ENCODE measurements at regions of chr9 and their contacts with region 1.

Region 1: GRCh38 chr9:98974994-98975712 is 31.4 kb downstream of the COL15A1 start:
- DNase-seq: peak; percentile 69 to 99
- H3K4me3 ChIP-seq: peak overlapping the region in 1 of 4 experiments; percentile 38; a peak in 1 of 8 replicates
- H3K27ac ChIP-seq: no peak overlapping the region
- H3K4me1 ChIP-seq: peaks cover 4 to 19% (median 9%) of the 10 kb centered on the region in 4 experiments
- H3K27me3 ChIP-seq: peaks cover 7 to 44% (median 28%) of the 10 kb centered on the region in 4 experiments
- CTCF ChIP-seq: peak; percentile 93 to 99 (median 99)
- EP300 ChIP-seq: no peak
- POLR2A ChIP-seq: no peak
- RAD21 ChIP-seq: peak; percentile 76 to 89

Region 2: DNA sequence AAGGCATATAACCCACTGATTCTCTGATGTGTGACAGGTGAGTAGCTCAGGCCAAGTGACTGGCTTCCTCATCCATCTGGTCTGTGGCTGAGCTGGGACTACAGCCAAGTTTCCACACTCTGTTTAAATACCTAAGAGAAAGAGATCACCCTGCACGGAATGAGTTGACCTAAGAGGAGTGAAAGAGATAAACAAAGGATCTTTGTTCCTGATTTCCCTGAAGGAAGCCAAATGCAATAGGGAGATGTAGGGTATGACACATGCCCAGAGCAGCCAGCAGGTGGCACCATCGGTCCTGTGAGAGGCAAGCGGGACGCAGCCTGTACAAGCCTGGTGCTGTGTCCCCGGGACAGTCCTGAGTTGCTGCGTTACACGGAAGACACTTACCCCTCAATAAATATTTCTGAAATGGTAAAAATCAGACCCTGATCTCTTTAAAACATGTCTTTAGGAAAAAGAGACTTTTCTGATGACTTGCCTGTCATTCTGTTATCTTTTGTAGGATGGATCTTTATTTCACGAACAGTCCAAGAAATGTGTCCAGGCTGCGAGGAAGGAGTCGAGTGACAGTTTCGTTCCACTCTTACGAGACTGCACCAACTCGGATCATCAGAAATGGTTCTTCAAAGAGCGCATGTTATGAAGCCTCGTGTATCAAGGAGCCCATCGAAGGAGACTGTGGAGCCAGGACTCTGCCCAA is 126.6 kb before region 1 on chr9:
- CTCF ChIA-PET with region 1: interaction called, 14 read pairs
- POLR2A ChIA-PET with region 1: no interaction called
- DNase-seq: peak; percentile 83 to 91
- H3K4me3 ChIP-seq: no peak overlapping the region
- H3K27ac ChIP-seq: no peak overlapping the region
- H3K4me1 ChIP-seq: peaks cover 0 to 5% (median 2%) of the 10 kb centered on the region in 4 experiments; a peak in 3 of 7 replicates
- H3K27me3 ChIP-seq: no peaks in the 10 kb centered on the region
- CTCF ChIP-seq: peak; percentile 86 to 96 (median 96)
- EP300 ChIP-seq: no peak
- POLR2A ChIP-seq: no peak
- RAD21 ChIP-seq: peak; percentile 95 to 98

Region 3: DNA sequence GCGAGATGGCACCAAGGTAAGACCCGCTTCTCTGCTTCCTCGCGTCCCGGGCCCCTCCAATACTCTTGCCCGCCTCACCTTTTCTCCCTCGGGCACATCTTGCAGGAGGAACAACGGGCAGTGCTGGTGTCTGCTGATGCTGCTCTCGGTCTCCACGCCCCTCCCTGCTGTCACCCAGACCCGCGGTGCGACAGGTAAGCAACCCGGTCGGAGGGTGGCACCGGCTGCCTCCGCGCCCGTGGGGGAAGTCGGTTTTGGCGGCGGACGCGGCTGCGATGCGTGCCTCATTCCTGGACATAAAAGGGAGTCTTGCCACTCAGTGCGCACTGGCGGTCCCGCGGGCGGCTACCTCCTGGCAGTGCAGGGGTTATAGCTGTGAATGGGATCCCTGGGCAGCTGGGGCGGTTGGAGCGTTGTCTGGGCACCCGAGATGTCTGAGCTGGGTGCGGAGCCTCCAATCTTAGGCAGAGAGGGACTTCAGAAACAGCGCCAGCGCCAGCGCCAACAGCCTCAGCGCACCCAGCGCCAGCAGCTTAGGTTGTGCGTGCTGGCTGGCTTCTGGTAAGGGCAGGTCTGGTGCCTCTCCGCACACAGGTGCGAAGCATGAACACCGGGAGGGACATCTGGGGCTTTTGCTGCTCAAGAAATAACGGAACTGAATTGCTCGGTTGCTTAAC is 31.0 kb before region 1 on chr9:
- CTCF ChIA-PET with region 1: interaction called, 20 read pairs
- POLR2A ChIA-PET with region 1: no interaction called
- DNase-seq: peak in 1 of 2 experiments; percentile 67
- H3K4me3 ChIP-seq: peak overlapping the region; percentile 40 to 70 (median 66)
- H3K27ac ChIP-seq: no peak overlapping the region
- H3K4me1 ChIP-seq: peaks cover 4 to 9% (median 4%) of the 10 kb centered on the region in 4 experiments; a peak in 5 of 7 replicates
- H3K27me3 ChIP-seq: peaks cover 22 to 46% (median 41%) of the 10 kb centered on the region in 4 experiments
- CTCF ChIP-seq: no peak
- EP300 ChIP-seq: no peak
- POLR2A ChIP-seq: no peak
- RAD21 ChIP-seq: no peak

Region 4: DNA sequence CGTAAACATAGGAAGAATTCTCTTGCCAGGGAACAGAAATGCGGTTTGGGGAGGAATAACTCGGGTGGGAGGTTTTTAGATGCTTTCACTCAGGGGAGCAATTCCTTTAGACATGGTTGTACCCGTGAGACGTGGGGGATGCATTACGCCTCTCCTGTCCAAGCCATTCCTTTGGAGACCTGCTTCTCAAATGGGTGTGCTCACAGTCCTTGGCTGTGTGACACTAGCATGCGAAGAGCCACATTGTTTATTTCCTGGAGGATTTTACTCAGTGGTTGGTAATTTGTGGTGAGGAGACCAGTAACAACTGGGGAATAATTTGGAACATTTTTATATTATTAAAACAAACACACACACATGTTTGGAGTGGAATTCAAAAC is 13.0 kb before region 1 on chr9:
- CTCF ChIA-PET with region 1: interaction called, 23 read pairs
- POLR2A ChIA-PET with region 1: interaction called, 3 read pairs
- DNase-seq: no peak
- H3K4me3 ChIP-seq: no peak overlapping the region
- H3K27ac ChIP-seq: no peak overlapping the region
- H3K4me1 ChIP-seq: peaks cover 2 to 10% (median 6%) of the 10 kb centered on the region in 4 experiments; a peak in 6 of 7 replicates
- H3K27me3 ChIP-seq: no peaks in the 10 kb centered on the region
- CTCF ChIP-seq: no peak
- EP300 ChIP-seq: no peak
- POLR2A ChIP-seq: no peak
- RAD21 ChIP-seq: no peak

Region 5: GRCh38 chr9:98989036-98990000 is 14.2 kb after region 1 on chr9:
- CTCF ChIA-PET with region 1: interaction called, 27 read pairs
- POLR2A ChIA-PET with region 1: no interaction called
- DNase-seq: no peak
- H3K4me3 ChIP-seq: no peak overlapping the region
- H3K27ac ChIP-seq: no peak overlapping the region
- H3K4me1 ChIP-seq: no peaks in the 10 kb centered on the region
- H3K27me3 ChIP-seq: no peaks in the 10 kb centered on the region
- CTCF ChIP-seq: peak; percentile 18 to 48 (median 41); a peak in 2 of 4 replicates
- EP300 ChIP-seq: no peak
- POLR2A ChIP-seq: no peak
- RAD21 ChIP-seq: peak; percentile 27 to 53; a peak in 3 of 4 replicates

Region 6: DNA sequence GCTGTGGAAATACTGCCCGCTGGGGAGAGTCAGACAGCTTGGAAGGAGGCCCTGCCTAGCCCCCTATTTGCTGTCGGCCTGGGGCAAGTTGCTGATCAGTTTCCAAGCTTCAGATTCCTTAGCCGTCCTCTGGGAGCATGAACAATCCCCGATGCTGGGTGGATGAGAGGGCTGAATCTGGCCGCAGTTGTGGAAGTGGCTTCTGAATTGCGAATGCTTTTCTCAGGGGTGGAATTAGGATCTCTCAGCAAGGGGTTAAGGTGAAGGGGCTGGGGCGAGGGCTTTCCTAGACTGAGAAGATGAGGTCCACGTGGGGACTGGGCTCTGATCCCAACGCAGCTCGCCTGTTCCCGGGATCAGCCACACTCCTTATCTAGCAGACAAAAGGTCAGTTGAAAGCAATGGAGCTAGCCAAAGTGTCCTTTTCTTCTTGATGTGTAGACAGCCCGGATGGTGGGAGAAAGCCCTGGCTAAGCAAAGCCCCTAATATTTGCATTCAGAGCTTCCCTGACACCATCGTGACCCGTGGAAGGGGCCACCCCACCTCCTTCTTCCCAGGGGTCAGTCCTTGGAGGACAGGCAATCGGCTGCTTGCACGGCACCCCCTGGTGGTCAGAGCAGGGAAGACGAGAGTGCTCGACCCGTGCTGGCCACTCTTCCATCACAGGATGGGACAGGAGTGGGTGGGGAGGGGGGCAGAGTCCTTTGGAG is 23.4 kb after region 1 on chr9:
- CTCF ChIA-PET with region 1: interaction called, 17 read pairs
- POLR2A ChIA-PET with region 1: no interaction called
- DNase-seq: peak; percentile 58 to 97
- H3K4me3 ChIP-seq: no peak overlapping the region
- H3K27ac ChIP-seq: no peak overlapping the region
- H3K4me1 ChIP-seq: peaks cover 0 to 4% (median under 1%) of the 10 kb centered on the region in 4 experiments; a peak in 2 of 7 replicates
- H3K27me3 ChIP-seq: no peaks in the 10 kb centered on the region; a peak in 1 of 7 replicates
- CTCF ChIP-seq: peak; percentile 81 to 98 (median 92)
- EP300 ChIP-seq: no peak
- POLR2A ChIP-seq: no peak
- RAD21 ChIP-seq: peak; percentile 79 to 87

Measured in H1 (cell line).